Stomach (tissue), 19 donors: ENCODE measurements at regions of chr11 and their contacts with region 1.

Region 1: GRCh38 chr11:122853971-122854446 is 15.7 kb downstream of the CRTAM start:
- DNase-seq: peak in 1 of 2 donors; percentile 89
- H3K4me3 ChIP-seq: no peak overlapping the region
- H3K27ac ChIP-seq: no peak overlapping the region
- H3K4me1 ChIP-seq: peaks cover 0 to 7% (median 0%) of the 10 kb centered on the region in 4 donors
- H3K27me3 ChIP-seq: peaks cover 0 to 19% (median 0%) of the 10 kb centered on the region in 3 donors
- CTCF ChIP-seq: peak in 5 of 7 experiments; percentile 37 to 71 (median 62)
- EP300 ChIP-seq: no peak
- POLR2A ChIP-seq: no peak

Region 2: GRCh38 chr11:122628810-122629555 is 225.0 kb before region 1 on chr11:
- intact Hi-C with region 1: loop called (anchors 5 kb)
- DNase-seq: peak; percentile 58 to 79
- H3K4me3 ChIP-seq: no peak overlapping the region
- H3K27ac ChIP-seq: no peak overlapping the region
- H3K4me1 ChIP-seq: peaks cover 0 to 9% (median 0%) of the 10 kb centered on the region in 4 donors
- H3K27me3 ChIP-seq: peaks cover 0 to 17% (median 0%) of the 10 kb centered on the region in 3 donors
- CTCF ChIP-seq: peak in 5 of 7 experiments; percentile 66 to 82 (median 72)
- EP300 ChIP-seq: no peak
- POLR2A ChIP-seq: no peak

Region 3: DNA sequence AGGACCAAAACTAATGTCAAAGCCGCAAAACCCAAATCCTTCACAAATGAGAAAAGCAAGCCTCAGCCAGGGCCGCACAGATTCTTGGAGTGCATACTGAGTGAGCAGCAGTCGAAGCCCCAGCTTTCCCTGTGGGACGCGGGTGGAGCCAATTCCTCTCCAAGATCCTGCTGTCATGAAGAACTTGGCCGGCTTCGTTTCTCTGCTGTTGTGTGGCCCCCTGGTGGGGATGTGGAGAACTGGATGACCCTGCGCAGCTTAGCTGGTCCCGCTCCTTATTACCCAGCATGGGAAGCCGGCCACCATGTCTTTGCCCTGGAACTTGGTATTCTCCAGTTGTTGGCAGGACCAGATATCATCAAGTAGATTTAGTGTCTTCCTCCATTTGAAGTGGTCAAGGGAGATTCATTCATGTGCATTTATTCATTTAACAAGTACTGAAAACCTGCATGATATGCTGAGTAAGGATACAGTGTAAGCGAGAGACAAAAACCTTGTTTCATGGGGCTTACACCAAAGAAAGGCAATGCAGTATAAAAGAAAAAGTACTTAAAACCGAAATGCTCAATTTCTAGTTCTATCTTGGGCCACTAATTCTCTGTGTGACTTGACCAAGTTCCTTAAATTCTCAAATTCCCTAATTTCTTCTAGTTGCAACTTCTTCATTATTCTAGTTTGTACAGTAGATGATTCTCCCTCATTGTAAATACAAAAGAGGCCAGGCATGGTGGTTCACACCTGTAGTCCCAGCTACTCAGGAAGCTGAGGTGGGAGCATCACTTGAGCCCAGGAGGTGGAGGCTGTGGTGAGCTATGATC is 72.4 kb before region 1 on chr11:
- intact Hi-C with region 1: loop called (anchors 10 kb)
- DNase-seq: peak; percentile 84 to 95
- H3K4me3 ChIP-seq: no peak overlapping the region
- H3K27ac ChIP-seq: no peak overlapping the region
- H3K4me1 ChIP-seq: peaks cover 0 to 21% (median 12%) of the 10 kb centered on the region in 4 donors
- H3K27me3 ChIP-seq: peaks cover 0 to 4% (median 0%) of the 10 kb centered on the region in 3 donors
- CTCF ChIP-seq: peak in 5 of 7 experiments; percentile 83 to 94 (median 92)
- EP300 ChIP-seq: no peak
- POLR2A ChIP-seq: no peak

Region 4: DNA sequence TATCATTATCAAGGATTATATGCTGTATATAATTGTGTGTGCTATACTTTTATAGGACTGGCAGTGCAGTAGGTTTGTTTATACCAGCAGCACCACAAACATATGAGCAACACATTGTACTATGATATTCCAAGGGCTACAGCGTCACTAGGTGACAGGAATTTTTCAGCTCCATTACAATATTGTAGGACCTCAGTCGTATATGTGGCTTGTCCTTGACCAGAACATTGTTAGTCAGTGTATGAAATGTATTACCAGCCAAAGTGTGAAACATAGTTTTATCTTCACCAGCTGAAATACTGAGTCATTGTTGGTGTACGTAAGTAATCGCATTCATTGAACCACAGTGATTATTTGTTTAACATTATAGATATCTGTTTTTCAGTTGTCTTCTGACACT is 48.9 kb after region 1 on chr11:
- intact Hi-C with region 1: no loop called
- DNase-seq: no peak
- H3K4me3 ChIP-seq: no peak overlapping the region
- H3K27ac ChIP-seq: no peak overlapping the region
- H3K4me1 ChIP-seq: no peaks in the 10 kb centered on the region
- H3K27me3 ChIP-seq: no peaks in the 10 kb centered on the region
- CTCF ChIP-seq: no peak
- EP300 ChIP-seq: no peak
- POLR2A ChIP-seq: no peak

Region 5: DNA sequence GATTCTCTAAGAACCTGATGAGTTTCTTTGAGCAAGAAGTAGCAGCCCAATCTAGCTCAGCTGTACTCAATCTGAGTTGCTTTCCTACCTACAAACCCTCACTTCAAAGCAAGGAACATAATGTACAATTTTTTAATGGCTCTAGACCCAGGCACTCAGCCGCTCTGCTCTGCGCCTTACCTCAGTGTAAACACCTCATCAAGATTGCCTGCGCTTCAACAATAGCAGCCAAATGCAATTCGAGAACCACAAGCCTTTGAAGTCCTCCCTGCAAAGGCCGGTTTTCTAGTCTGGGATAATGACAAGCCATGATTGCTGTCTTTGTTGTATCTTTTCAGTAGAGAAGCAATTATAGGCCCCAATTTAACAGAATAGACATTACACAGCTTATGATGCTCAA is 66.6 kb after region 1 on chr11:
- intact Hi-C with region 1: no loop called
- DNase-seq: no peak
- H3K4me3 ChIP-seq: no peak overlapping the region
- H3K27ac ChIP-seq: no peak overlapping the region
- H3K4me1 ChIP-seq: peaks cover 0 to 4% (median 0%) of the 10 kb centered on the region in 4 donors
- H3K27me3 ChIP-seq: no peaks in the 10 kb centered on the region
- CTCF ChIP-seq: no peak
- EP300 ChIP-seq: no peak
- POLR2A ChIP-seq: no peak

Region 6: DNA sequence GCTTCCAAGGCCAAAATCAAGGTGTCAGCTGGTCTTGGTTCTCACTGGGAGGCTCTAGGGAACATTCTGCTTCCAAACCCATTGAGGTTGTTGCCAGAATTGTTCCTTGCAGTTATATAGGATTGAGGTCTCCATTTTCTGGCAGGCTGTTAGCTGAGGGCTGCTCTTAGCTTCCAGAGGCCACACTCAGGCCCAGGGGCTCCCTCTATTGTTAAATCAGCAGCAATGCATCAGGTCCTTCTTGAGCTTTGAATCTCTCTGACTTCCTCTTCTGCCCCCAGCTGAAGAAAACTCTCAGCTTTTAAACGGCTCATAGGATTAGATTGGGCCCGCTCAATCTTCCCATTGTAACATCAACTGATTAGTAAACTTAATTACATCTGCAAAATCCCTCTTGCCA is 167.0 kb after region 1 on chr11:
- intact Hi-C with region 1: no loop called
- DNase-seq: peak in 1 of 2 donors; percentile 56
- H3K4me3 ChIP-seq: no peak overlapping the region
- H3K27ac ChIP-seq: no peak overlapping the region
- H3K4me1 ChIP-seq: peaks cover 0 to 8% (median 3%) of the 10 kb centered on the region in 4 donors
- H3K27me3 ChIP-seq: peaks cover 0 to 30% (median 0%) of the 10 kb centered on the region in 3 donors
- CTCF ChIP-seq: peak in 2 of 7 experiments; percentile 8 to 10
- EP300 ChIP-seq: no peak
- POLR2A ChIP-seq: no peak